IMR-90 (cell line): ENCODE measurements at regions of chr19 and their contacts with region 1.

Region 1: GRCh38 chr19:29694669-29695627 is 20.1 kb downstream of the C19orf12 start:
- DNase-seq: peak; percentile 70
- ATAC-seq: peak; percentile 99
- H3K4me3 ChIP-seq: no peak overlapping the region
- H3K27ac ChIP-seq: no peak overlapping the region
- H3K4me1 ChIP-seq: peaks cover 6% of the 10 kb centered on the region; the same call in 1 of the 2 replicates
- H3K27me3 ChIP-seq: no peaks in the 10 kb centered on the region
- CTCF ChIP-seq: peak; percentile 90
- POLR2A ChIP-seq: no peak
- RAD21 ChIP-seq: peak; percentile 76

Region 2: GRCh38 chr19:29294343-29294811 is 400.6 kb before region 1 on chr19:
- CTCF ChIA-PET with region 1: no interaction called
- POLR2A ChIA-PET with region 1: no interaction called
- dilution Hi-C with region 1: no loop called
- in situ Hi-C with region 1: no loop called
- intact Hi-C with region 1: no loop called
- DNase-seq: peak; percentile 21
- ATAC-seq: no peak
- H3K4me3 ChIP-seq: no peak overlapping the region
- H3K27ac ChIP-seq: no peak overlapping the region
- H3K4me1 ChIP-seq: no peaks in the 10 kb centered on the region
- H3K27me3 ChIP-seq: no peaks in the 10 kb centered on the region
- CTCF ChIP-seq: no peak
- POLR2A ChIP-seq: no peak
- RAD21 ChIP-seq: no peak

Region 3: DNA sequence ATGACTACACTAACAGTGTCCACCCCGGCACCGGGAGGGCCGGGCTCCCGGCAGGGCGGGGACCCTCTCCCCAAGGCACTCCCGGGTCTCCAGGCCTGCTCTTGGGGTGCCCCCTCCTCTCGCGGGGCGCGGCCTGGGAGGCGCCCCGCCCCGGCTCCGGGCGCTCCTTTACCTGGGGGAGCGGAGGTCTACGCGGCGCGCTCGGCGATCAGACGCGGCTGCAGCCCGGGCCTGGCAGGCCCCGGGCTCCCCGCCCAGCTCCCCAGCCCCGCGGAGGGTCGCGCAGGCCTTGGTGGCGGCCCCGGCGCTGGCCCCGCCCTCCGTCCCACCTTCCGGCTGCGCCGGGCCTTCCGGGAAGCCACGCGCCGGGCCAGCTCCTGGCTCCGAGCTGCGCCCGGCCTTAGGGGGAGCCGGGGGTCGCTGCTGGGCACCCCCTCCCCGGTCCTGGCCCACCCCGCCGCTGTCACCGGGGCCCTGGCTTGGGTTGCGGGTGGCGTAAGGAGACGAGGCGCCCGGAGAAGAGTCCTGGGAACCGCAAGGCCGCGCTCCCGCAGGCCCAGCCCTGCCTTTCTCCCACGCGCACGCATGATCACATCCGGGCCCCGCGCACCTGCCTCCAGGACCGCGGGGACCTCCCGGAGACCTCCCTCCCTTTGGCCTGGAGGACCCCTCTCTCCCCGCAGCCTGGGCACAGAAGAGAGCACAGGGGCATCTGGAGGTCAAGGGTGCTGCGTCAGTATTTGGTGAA is 20.2 kb after region 1 on chr19 and contains the start of gene C19orf12:
- CTCF ChIA-PET with region 1: interaction called, 7 read pairs
- POLR2A ChIA-PET with region 1: no interaction called
- dilution Hi-C with region 1: no loop called
- in situ Hi-C with region 1: no loop called
- intact Hi-C with region 1: loop called (anchors 1 kb)
- DNase-seq: peak; percentile 23
- ATAC-seq: peak; percentile 82
- H3K4me3 ChIP-seq: peak within 1 kb of the TSS; percentile 91
- H3K27ac ChIP-seq: peak within 1 kb of the TSS; percentile 93
- H3K4me1 ChIP-seq: peaks cover 6% of the 10 kb centered on the region
- H3K27me3 ChIP-seq: no peaks in the 10 kb centered on the region
- CTCF ChIP-seq: no peak
- POLR2A ChIP-seq: peak; percentile 84
- RAD21 ChIP-seq: no peak
- total RNA-seq, gene C19orf12: 16.3 and 19.2 TPM in 2 replicates